ENCODE measurements at regions of chr3 and their contacts with region 1.

Region 1: DNA sequence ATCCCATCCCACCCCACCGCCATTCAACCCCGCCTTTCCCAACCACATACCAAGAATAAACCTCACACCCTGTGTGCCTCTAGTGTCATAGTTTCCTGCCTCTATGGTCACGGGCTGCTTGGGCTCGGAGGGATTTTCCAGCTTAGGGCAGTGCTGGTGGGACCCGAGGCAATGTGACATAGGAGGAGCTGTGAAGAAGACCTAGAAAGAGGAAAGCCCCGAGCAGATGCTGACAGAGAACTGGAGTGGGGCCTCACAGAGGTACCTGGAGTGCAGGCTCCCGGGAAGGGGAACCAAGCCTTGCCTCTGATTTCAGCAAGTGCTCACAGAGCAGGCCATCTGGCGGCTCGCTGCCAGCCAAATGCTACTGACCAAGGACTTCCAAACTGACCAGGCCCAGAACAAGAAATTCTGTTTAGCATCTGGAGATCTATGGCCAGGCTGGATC is 27.5 kb downstream of the BHLHE40 start:
- DNase-seq: peak; percentile 95
- H3K4me3 Mint-ChIP-seq: peak overlapping the region; percentile 71
- H3K27ac Mint-ChIP-seq: peak overlapping the region; percentile 95
- H3K4me1 Mint-ChIP-seq: peaks cover 61% of the 10 kb centered on the region
- H3K27me3 Mint-ChIP-seq: no peaks in the 10 kb centered on the region

Region 2: GRCh38 chr3:4807381-4808280 is 199.1 kb before region 1 on chr3:
- intact Hi-C with region 1: no loop called
- DNase-seq: no peak
- H3K4me3 Mint-ChIP-seq: no peak overlapping the region
- H3K27ac Mint-ChIP-seq: no peak overlapping the region
- H3K4me1 Mint-ChIP-seq: peaks cover 60% of the 10 kb centered on the region
- H3K27me3 Mint-ChIP-seq: no peaks in the 10 kb centered on the region

Region 3: GRCh38 chr3:4986782-4987537 is 19.8 kb before region 1 on chr3:
- intact Hi-C with region 1: loop called (anchors 1 kb)
- DNase-seq: peak; percentile 94
- H3K4me3 Mint-ChIP-seq: peak overlapping the region; percentile 84
- H3K27ac Mint-ChIP-seq: peak overlapping the region; percentile 94
- H3K4me1 Mint-ChIP-seq: peaks cover 54% of the 10 kb centered on the region
- H3K27me3 Mint-ChIP-seq: no peaks in the 10 kb centered on the region

Region 4: GRCh38 chr3:5110337-5110736 is 103.6 kb after region 1 on chr3:
- intact Hi-C with region 1: no loop called
- DNase-seq: no peak
- H3K4me3 Mint-ChIP-seq: no peak overlapping the region
- H3K27ac Mint-ChIP-seq: no peak overlapping the region
- H3K4me1 Mint-ChIP-seq: peaks cover 5% of the 10 kb centered on the region
- H3K27me3 Mint-ChIP-seq: peaks cover 2% of the 10 kb centered on the region

Region 5: GRCh38 chr3:6156386-6156785 is 1149.6 kb after region 1 on chr3:
- intact Hi-C with region 1: no loop called
- DNase-seq: no peak
- H3K4me3 Mint-ChIP-seq: no peak overlapping the region
- H3K27ac Mint-ChIP-seq: no peak overlapping the region
- H3K4me1 Mint-ChIP-seq: no peaks in the 10 kb centered on the region
- H3K27me3 Mint-ChIP-seq: no peaks in the 10 kb centered on the region